H1 (cell line): ENCODE measurements at regions of chr1 and their contacts with region 1.

Region 1: GRCh38 chr1:26351591-26352337 is 2.2 kb downstream of the CRYBG2 start:
- DNase-seq: no peak
- H3K4me3 ChIP-seq: no peak overlapping the region
- H3K27ac ChIP-seq: no peak overlapping the region
- H3K4me1 ChIP-seq: peaks cover 7 to 28% (median 10%) of the 10 kb centered on the region in 4 experiments
- H3K27me3 ChIP-seq: no peaks in the 10 kb centered on the region
- CTCF ChIP-seq: no peak
- EP300 ChIP-seq: no peak
- POLR2A ChIP-seq: no peak
- RAD21 ChIP-seq: no peak

Region 2: GRCh38 chr1:26336477-26337205 is 15.1 kb before region 1 on chr1:
- CTCF ChIA-PET with region 1: interaction called, 9 read pairs
- POLR2A ChIA-PET with region 1: interaction called, 44 read pairs
- DNase-seq: peak; percentile 67 to 97
- H3K4me3 ChIP-seq: peak overlapping the region; percentile 55 to 86 (median 68)
- H3K27ac ChIP-seq: 0 out of 2 replicates have a peak overlapping the region, but pooled peaks have one; percentile 39
- H3K4me1 ChIP-seq: peaks cover 3 to 12% (median 6%) of the 10 kb centered on the region in 4 experiments
- H3K27me3 ChIP-seq: peaks cover 0 to 11% (median 5%) of the 10 kb centered on the region in 4 experiments; a peak in 5 of 7 replicates
- CTCF ChIP-seq: no peak
- EP300 ChIP-seq: no peak
- POLR2A ChIP-seq: no peak
- RAD21 ChIP-seq: no peak

Region 3: GRCh38 chr1:26378088-26378878 is 26.5 kb after region 1 on chr1:
- CTCF ChIA-PET with region 1: interaction called, 10 read pairs
- POLR2A ChIA-PET with region 1: interaction called, 3 read pairs
- DNase-seq: no peak
- H3K4me3 ChIP-seq: no peak overlapping the region
- H3K27ac ChIP-seq: no peak overlapping the region
- H3K4me1 ChIP-seq: peaks cover 0 to 2% (median 0%) of the 10 kb centered on the region in 4 experiments; a peak in 2 of 7 replicates
- H3K27me3 ChIP-seq: no peaks in the 10 kb centered on the region
- CTCF ChIP-seq: no peak
- EP300 ChIP-seq: no peak
- POLR2A ChIP-seq: no peak
- RAD21 ChIP-seq: no peak